ENCODE measurements at regions of chr10 and their contacts with region 1.

Region 1: GRCh38 chr10:16545116-16545736 is 23.5 kb upstream of the C1QL3 start:
- DNase-seq: peak in 2 of 9 experiments; percentile 15 to 37
- ATAC-seq: no peak
- H3K4me3 ChIP-seq: no peak overlapping the region
- H3K4me3 Mint-ChIP-seq: no peak overlapping the region
- H3K27ac ChIP-seq: no peak overlapping the region
- H3K27ac Mint-ChIP-seq: no peak overlapping the region
- H3K4me1 ChIP-seq: no peaks in the 10 kb centered on the region
- H3K4me1 Mint-ChIP-seq: no peaks in the 10 kb centered on the region
- H3K27me3 ChIP-seq: no peaks in the 10 kb centered on the region
- H3K27me3 Mint-ChIP-seq: peaks cover 26% of the 10 kb centered on the region
- CTCF ChIP-seq: no peak

Region 2: DNA sequence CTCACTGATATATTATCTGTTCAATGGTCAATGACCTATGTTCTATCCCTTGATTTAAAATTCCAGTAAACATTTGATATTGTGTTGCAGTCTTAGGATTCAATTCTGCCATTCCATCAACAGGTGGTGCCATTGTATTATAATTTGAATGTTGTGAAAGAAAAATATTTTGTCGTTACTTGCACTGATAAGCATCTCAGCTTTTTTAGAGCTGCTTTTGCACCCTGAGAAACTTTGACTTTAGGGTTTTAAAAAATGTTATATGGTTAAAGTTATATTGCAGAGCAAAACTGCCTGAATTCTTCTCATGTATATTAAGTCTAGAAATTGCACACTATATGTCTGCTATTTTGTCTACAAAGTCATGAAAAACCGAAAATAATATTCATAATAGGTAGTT is 666.2 kb before region 1 on chr10:
- CTCF ChIA-PET with region 1: no interaction called
- POLR2A ChIA-PET with region 1: no interaction called
- intact Hi-C with region 1: loop called in 1 of 2 experiments (anchors 5 kb)
- DNase-seq: peak in 2 of 9 experiments; percentile 32 to 52
- ATAC-seq: peak; percentile 52
- H3K4me3 ChIP-seq: no peak overlapping the region
- H3K4me3 Mint-ChIP-seq: no peak overlapping the region
- H3K27ac ChIP-seq: no peak overlapping the region
- H3K27ac Mint-ChIP-seq: no peak overlapping the region
- H3K4me1 ChIP-seq: no peaks in the 10 kb centered on the region
- H3K4me1 Mint-ChIP-seq: no peaks in the 10 kb centered on the region
- H3K27me3 ChIP-seq: peaks cover 0 to 3% of the 10 kb centered on the region in 2 experiments
- H3K27me3 Mint-ChIP-seq: peaks cover 51% of the 10 kb centered on the region
- CTCF ChIP-seq: peak; percentile 67

Region 3: DNA sequence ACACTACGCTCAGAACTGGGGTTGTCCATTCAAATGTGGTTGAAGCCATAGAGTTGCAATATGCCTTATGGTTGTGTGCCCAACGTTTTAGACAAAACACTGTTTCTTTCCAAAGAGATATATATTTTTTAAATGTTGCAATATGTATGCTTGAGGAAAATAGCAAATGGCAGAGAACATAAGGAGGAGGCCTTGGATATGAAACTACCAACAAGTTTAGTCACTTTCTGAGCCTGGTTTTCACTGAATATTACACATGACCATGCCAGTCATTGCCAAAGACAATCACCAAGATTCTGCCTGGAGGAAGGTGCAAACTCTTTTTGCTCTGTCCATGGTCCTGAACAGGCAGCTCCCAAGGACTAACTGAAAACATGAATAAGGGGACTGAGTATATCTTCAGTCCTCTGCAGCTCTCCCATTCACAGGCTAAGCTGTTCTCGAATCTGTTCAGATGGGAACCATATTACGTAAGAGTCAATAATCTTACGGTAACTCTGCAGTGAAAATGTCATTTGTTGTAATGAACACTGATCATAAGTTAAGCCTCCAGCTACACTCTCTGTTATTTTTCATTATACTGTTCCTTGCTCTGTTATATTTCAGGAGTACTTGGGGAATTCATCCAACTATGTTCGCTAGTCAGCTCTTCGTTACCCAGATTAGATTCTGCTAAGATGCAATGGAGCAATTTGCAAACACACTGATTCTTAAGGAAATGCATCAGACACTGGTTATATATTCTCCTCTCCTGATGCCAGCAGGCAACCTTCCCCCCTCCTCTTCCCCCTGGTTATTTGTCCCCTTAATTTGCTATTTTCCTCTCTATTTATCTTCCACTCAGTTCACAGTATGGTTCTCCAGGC is 67.1 kb after region 1 on chr10:
- CTCF ChIA-PET with region 1: no interaction called
- POLR2A ChIA-PET with region 1: no interaction called
- intact Hi-C with region 1: no loop called
- DNase-seq: peak in 3 of 9 experiments; percentile 7 to 17 (median 12)
- ATAC-seq: no peak
- H3K4me3 ChIP-seq: no peak overlapping the region
- H3K4me3 Mint-ChIP-seq: no peak overlapping the region
- H3K27ac ChIP-seq: no peak overlapping the region
- H3K27ac Mint-ChIP-seq: no peak overlapping the region
- H3K4me1 ChIP-seq: no peaks in the 10 kb centered on the region
- H3K4me1 Mint-ChIP-seq: no peaks in the 10 kb centered on the region
- H3K27me3 ChIP-seq: no peaks in the 10 kb centered on the region
- H3K27me3 Mint-ChIP-seq: no peaks in the 10 kb centered on the region
- CTCF ChIP-seq: no peak